HCT116 (cell line): ENCODE measurements at regions of chr6 and their contacts with region 1.

Region 1: GRCh38 chr6:52664186-52664990 is 6.5 kb upstream of the TMEM14A start:
- DNase-seq: peak; percentile 93
- ATAC-seq: peak; percentile 99
- H3K4me3 ChIP-seq: peak overlapping the region; percentile 45 to 62
- H3K27ac ChIP-seq: peak overlapping the region; percentile 11; the same call in 1 of the 2 replicates
- H3K4me1 ChIP-seq: peaks cover 5 to 21% of the 10 kb centered on the region in 2 experiments; a peak in 3 of 4 replicates
- H3K27me3 ChIP-seq: no peaks in the 10 kb centered on the region
- CTCF ChIP-seq: no peak
- POLR2A ChIP-seq: no peak
- RAD21 ChIP-seq: no peak

Region 2: DNA sequence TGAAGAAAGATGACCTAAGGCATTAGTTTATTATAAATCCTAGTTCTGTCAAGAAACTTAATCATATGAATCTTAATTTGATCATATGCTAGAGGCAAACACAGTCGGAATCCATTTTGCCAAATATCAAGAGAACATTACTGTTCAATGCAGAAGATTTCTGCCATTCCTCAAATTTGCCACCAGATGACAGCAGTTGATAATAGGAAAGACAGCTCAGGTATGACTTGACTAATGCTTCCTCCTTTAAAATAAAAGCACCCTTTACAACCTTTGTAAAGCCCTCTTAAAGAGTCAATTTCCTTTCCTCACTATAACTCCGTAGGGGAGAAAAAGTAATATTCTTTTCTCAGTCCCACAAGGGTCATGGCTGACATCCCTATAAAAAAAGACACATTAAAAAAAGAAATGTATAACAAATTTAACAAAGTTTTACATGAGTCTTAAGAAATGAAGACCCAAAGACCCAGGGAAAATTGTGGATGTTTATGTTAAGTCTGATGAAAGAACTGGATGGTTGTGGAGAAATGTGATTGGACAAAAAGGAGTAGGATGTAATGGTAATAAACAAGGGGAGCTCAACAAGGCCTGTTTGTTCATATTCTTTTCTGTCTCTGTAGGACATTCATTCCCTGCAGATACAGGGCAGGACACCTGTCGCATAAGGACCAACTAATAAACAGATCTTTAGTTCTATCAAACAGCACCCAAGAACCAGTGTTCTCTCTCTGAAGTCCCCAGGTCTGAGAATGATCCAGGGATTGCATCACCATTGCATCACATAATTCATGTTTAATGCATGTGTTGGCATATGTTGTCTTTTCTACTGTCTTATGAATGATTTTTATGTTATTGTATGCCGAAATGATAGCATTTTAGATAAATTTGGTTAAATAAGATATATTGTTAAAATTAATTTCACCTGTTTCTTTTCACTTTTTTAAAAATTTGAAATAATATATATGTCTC is 501.2 kb before region 1 on chr6:
- CTCF ChIA-PET with region 1: no interaction called
- POLR2A ChIA-PET with region 1: no interaction called
- RAD21 ChIA-PET with region 1: no interaction called
- intact Hi-C with region 1: loop called (anchors 2 kb)
- DNase-seq: peak; percentile 54
- ATAC-seq: peak; percentile 91
- H3K4me3 ChIP-seq: no peak overlapping the region
- H3K27ac ChIP-seq: no peak overlapping the region
- H3K4me1 ChIP-seq: no peaks in the 10 kb centered on the region
- H3K27me3 ChIP-seq: no peaks in the 10 kb centered on the region
- CTCF ChIP-seq: peak; percentile 73 to 85 (median 84)
- POLR2A ChIP-seq: no peak
- RAD21 ChIP-seq: peak; percentile 91

Region 3: GRCh38 chr6:52284460-52285176 is 379.8 kb before region 1 on chr6 and contains the start of gene MCM3:
- CTCF ChIA-PET with region 1: interaction called, 8 read pairs
- POLR2A ChIA-PET with region 1: no interaction called
- RAD21 ChIA-PET with region 1: no interaction called
- intact Hi-C with region 1: loop called (anchors 2 kb)
- DNase-seq: peak; percentile 99
- ATAC-seq: peak; percentile 97
- H3K4me3 ChIP-seq: peak within 1 kb of the TSS; percentile 88 to 92
- H3K27ac ChIP-seq: peak within 1 kb of the TSS; percentile 81
- H3K4me1 ChIP-seq: peaks cover 4 to 22% of the 10 kb centered on the region in 2 experiments; a peak in 3 of 4 replicates
- H3K27me3 ChIP-seq: no peaks in the 10 kb centered on the region
- CTCF ChIP-seq: no peak
- POLR2A ChIP-seq: no peak
- RAD21 ChIP-seq: no peak
- total RNA-seq, gene MCM3: 191 TPM

Region 4: GRCh38 chr6:52407467-52407866 is 256.9 kb before region 1 on chr6:
- CTCF ChIA-PET with region 1: interaction called, 13 read pairs
- POLR2A ChIA-PET with region 1: no interaction called
- RAD21 ChIA-PET with region 1: interaction called in 1 of 2 experiments, 4 read pairs
- intact Hi-C with region 1: loop called (anchors 1 kb)
- DNase-seq: no peak
- ATAC-seq: peak; percentile 83
- H3K4me3 ChIP-seq: no peak overlapping the region
- H3K27ac ChIP-seq: no peak overlapping the region
- H3K4me1 ChIP-seq: peaks cover 0 to 5% of the 10 kb centered on the region in 2 experiments; a peak in 1 of 4 replicates
- H3K27me3 ChIP-seq: no peaks in the 10 kb centered on the region
- CTCF ChIP-seq: peak; percentile 68 to 75 (median 69)
- POLR2A ChIP-seq: no peak
- RAD21 ChIP-seq: peak; percentile 76

Region 5: GRCh38 chr6:52503848-52504781 is 160.3 kb before region 1 on chr6:
- CTCF ChIA-PET with region 1: no interaction called
- POLR2A ChIA-PET with region 1: no interaction called
- RAD21 ChIA-PET with region 1: no interaction called
- intact Hi-C with region 1: loop called (anchors 5 kb)
- DNase-seq: peak; percentile 94
- ATAC-seq: peak; percentile 88
- H3K4me3 ChIP-seq: peak overlapping the region; percentile 13 to 35; a peak in 3 of 4 replicates
- H3K27ac ChIP-seq: peak overlapping the region; percentile 76
- H3K4me1 ChIP-seq: peaks cover 27 to 42% of the 10 kb centered on the region in 2 experiments
- H3K27me3 ChIP-seq: no peaks in the 10 kb centered on the region
- CTCF ChIP-seq: no peak
- POLR2A ChIP-seq: no peak
- RAD21 ChIP-seq: peak; percentile 37

Region 6: GRCh38 chr6:52647199-52647598 is 17.2 kb before region 1 on chr6:
- CTCF ChIA-PET with region 1: interaction called, 20 read pairs
- POLR2A ChIA-PET with region 1: interaction called, 5 read pairs
- RAD21 ChIA-PET with region 1: no interaction called
- intact Hi-C with region 1: no loop called
- DNase-seq: no peak
- ATAC-seq: no peak
- H3K4me3 ChIP-seq: no peak overlapping the region
- H3K27ac ChIP-seq: no peak overlapping the region
- H3K4me1 ChIP-seq: no peaks in the 10 kb centered on the region; a peak in 1 of 4 replicates
- H3K27me3 ChIP-seq: no peaks in the 10 kb centered on the region
- CTCF ChIP-seq: no peak
- POLR2A ChIP-seq: no peak
- RAD21 ChIP-seq: no peak

Region 7: GRCh38 chr6:53128842-53129241 is 464.5 kb after region 1 on chr6:
- CTCF ChIA-PET with region 1: no interaction called
- POLR2A ChIA-PET with region 1: no interaction called
- RAD21 ChIA-PET with region 1: no interaction called
- intact Hi-C with region 1: no loop called
- DNase-seq: no peak
- ATAC-seq: no peak
- H3K4me3 ChIP-seq: no peak overlapping the region
- H3K27ac ChIP-seq: no peak overlapping the region
- H3K4me1 ChIP-seq: no peaks in the 10 kb centered on the region
- H3K27me3 ChIP-seq: peaks cover 13% of the 10 kb centered on the region
- CTCF ChIP-seq: no peak
- POLR2A ChIP-seq: no peak
- RAD21 ChIP-seq: no peak